ENCODE measurements at regions of chr15 and their contacts with region 1.

Region 1: DNA sequence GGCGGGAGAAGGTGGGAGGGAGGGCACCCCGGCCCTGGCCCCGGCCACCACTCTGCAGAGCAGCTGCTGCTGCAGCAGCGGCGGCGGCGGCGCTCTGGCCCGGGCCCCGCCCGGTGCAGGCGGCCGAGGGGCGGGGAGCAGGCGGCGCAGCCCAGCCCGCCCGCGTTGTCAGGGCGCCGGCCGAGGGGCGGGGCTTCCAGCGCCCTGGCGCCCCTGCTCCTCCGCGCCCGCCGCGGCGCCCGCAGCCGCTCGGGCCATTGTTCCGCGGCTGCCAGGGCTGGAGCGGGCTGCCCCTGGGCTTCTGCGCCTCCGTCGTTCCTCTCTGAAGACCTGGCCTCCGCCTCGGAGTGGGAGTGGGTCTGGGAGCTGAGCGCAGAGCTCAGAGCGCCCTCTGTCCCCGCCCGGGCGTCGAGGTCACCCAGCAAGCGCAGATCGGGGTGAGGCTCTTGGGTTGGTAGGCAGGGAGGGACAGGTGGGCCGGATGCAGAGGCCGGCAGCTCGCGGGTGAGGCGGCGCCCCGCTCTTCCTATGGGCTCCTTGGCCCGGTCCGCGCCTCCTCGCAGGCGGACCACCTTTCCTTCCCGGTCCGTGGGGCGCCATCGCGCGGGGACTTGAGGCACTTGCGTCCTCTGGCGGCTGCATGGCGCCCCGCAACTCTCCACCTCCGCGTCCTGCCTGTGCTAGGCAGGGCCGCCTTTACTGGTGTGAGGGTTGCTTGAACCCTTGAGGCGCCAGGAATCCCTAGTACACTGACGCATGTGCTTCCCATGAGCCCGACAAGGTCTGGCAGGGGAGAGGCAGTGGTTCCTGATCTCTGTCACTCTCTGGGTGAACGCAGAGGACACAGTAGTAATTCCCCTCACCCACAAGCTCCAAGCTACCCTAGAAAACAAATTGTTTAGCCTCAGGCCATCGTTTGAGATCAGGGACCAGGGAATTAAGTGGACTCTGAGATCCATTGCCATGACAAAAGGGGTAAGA is at the start of gene LPCAT4:
- DNase-seq: peak; percentile 76 to 82
- ATAC-seq: peak; percentile 91 to 92
- H3K4me3 ChIP-seq: peak within 1 kb of the TSS; percentile 88 to 98 (median 92)
- H3K27ac ChIP-seq: peak within 1 kb of the TSS; percentile 92 to 99 (median 96)
- H3K4me1 ChIP-seq: peaks cover 14 to 21% of the 10 kb centered on the region in 2 donors
- H3K27me3 ChIP-seq: no peaks in the 10 kb centered on the region
- CTCF ChIP-seq: peak; percentile 88 to 98 (median 97)
- POLR2A ChIP-seq: peak; percentile 56 to 59
- total RNA-seq, gene LPCAT4: 1.7 to 7.4 (median 4.0) TPM

Region 2: DNA sequence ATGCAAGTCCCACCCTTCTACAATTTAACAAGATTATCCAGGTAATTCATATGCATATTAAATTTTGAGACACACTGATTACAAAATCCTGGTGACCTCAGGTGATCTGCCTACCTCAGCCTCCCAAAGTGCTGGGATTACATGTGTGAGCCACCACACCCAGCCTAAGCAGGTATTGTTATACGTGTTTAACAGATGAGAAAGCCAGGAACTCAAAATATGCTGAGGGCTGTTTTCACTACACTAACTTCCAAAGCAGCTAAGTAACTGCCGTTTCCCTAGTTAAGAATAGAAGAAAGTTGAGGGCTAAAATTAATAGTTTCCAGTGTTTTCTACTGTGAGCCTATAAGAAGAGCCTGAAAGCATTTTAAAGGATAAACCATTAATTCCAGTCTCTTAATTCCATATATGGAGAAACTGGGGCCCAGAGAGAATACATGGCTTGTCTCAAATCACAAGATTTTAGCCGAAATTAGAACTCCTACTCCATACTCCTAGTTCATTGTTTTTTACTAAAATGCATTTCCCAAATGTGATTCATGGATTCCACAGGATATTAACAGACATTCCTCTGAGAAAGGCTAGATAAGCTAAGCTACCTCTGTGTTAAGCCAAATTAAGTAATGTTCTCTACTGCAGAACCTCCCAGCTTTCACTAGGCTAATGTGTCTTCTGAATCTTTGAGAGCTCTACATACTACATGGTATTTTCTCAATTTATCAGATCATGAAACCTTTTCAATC is 311.4 kb before region 1 on chr15:
- in situ Hi-C with region 1: loop called in 1 of 4 experiments (anchors 25 kb)
- intact Hi-C with region 1: no loop called
- DNase-seq: no peak
- ATAC-seq: no peak
- H3K4me3 ChIP-seq: no peak overlapping the region
- H3K27ac ChIP-seq: no peak overlapping the region
- H3K4me1 ChIP-seq: no peaks in the 10 kb centered on the region
- H3K27me3 ChIP-seq: no peaks in the 10 kb centered on the region
- CTCF ChIP-seq: no peak
- POLR2A ChIP-seq: no peak

Region 3: GRCh38 chr15:34084086-34084485 is 283.3 kb before region 1 on chr15:
- in situ Hi-C with region 1: no loop called
- intact Hi-C with region 1: no loop called
- DNase-seq: peak in 1 of 2 donors; percentile 57
- ATAC-seq: peak; percentile 75 to 96
- H3K4me3 ChIP-seq: no peak overlapping the region
- H3K27ac ChIP-seq: peak overlapping the region in 2 of 4 donors; percentile 23 to 41
- H3K4me1 ChIP-seq: no peaks in the 10 kb centered on the region
- H3K27me3 ChIP-seq: no peaks in the 10 kb centered on the region
- CTCF ChIP-seq: no peak
- POLR2A ChIP-seq: no peak

Region 4: DNA sequence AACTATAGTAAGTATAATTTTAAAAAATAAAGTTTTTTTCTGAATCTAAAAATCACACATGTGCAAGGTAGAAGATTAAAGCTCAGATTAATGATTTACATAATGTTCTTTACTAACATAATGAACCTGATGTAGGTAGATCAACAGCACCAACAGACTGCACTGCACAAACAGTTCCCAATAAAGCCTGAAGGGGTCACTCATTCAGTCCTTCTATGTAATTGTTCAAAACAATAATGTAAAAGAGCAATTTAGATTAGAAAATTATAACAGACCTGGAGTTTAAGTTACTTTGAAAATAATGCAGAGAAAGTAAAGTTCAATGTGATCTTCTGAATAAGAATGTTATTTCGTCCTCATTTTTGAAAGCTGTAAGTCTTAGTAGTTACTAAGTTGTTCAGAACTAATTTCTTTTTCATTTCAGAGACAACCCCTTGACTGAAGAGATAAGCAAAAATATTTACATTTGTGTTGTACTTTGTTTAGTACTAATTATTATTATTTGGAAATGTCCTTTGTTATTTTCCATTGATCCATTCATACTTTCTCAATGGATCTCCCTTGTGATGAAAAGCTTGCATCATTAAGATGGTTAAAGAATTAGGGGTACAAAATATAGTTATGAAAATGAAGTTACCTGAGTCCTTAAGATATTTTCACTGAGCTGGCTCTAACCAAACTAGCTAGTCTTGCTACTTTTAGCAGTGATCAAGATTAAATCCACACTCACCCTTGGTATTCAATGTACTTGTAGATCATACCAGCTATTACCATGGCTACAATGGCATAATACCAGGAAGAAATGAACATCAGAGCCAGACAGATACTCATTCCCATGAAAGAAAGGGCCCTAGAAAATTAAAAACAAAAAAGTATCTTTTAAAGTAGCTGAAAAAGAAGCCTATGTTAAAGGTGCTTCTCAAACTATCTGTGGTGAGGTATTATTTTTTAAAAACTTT is 125.7 kb before region 1 on chr15:
- in situ Hi-C with region 1: loop called in 2 of 4 experiments (anchors 10 to 25 kb)
- intact Hi-C with region 1: loop called (anchors 5 kb)
- DNase-seq: no peak
- ATAC-seq: peak in 1 of 2 donors; percentile 58
- H3K4me3 ChIP-seq: no peak overlapping the region
- H3K27ac ChIP-seq: no peak overlapping the region
- H3K4me1 ChIP-seq: no peaks in the 10 kb centered on the region
- H3K27me3 ChIP-seq: no peaks in the 10 kb centered on the region
- CTCF ChIP-seq: peak in 4 of 5 experiments; percentile 40 to 72 (median 55)
- POLR2A ChIP-seq: no peak

Region 5: GRCh38 chr15:34304613-34305012 is 62.8 kb before region 1 on chr15:
- in situ Hi-C with region 1: no loop called
- intact Hi-C with region 1: no loop called
- DNase-seq: no peak
- ATAC-seq: no peak
- H3K4me3 ChIP-seq: no peak overlapping the region
- H3K27ac ChIP-seq: no peak overlapping the region
- H3K4me1 ChIP-seq: peaks cover 0 to 7% of the 10 kb centered on the region in 2 donors
- H3K27me3 ChIP-seq: no peaks in the 10 kb centered on the region
- CTCF ChIP-seq: no peak
- POLR2A ChIP-seq: no peak

Region 6: DNA sequence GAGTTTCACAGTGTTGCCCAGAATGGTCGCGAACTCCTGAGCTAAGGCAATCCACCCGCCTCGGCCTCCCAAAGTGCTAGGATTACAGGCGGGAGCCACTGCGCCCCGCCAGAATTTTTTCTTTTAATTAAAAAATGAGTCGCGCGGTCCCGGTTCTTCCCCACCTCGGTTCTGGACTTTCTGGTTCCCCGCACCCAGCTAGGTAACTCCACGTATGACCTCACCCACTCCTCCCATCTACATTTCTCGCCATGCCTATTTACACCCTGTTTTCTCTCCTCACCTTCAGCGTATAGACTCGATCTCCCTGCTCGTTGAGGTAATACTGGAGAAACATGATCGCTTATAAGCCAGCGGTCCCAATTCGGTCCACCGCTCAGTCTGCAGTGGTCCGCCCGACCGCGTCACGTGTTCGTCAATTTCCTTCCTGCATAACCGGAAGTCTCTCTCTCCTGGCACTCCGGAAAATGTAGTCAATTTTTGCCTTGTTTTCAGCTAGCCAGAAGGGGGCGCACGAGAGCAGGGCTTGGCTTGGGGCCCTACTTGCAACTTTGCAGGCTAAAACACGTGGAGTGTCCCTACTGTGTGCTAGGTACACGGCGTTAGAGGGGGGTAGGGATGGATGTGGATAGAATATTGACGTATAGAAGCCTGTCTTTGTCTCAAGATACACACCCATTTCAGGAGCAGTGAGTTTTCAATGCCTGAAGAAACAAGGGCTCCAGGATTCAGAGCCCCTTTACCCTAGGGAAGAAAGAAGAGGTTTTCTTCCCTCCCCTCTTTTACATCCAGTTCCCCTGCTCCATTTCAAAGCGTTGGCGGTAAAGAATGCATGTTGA is 24.4 kb before region 1 on chr15 and contains the starts of genes NOP10 and NUTM1:
- in situ Hi-C with region 1: no loop called
- intact Hi-C with region 1: loop called (anchors 1 kb)
- DNase-seq: peak; percentile 83 to 89
- ATAC-seq: peak; percentile 98 to 99
- H3K4me3 ChIP-seq: peak within 1 kb of the TSS; percentile 80 to 99 (median 84)
- H3K27ac ChIP-seq: peak within 1 kb of the TSS; percentile 88 to 96 (median 90)
- H3K4me1 ChIP-seq: peaks cover 14 to 21% of the 10 kb centered on the region in 2 donors
- H3K27me3 ChIP-seq: no peaks in the 10 kb centered on the region
- CTCF ChIP-seq: peak; percentile 93 to 97 (median 94)
- POLR2A ChIP-seq: peak; percentile 67 to 72
- total RNA-seq, gene NOP10: 142 to 194 (median 170) TPM
- total RNA-seq, gene NUTM1: not detected

Region 7: GRCh38 chr15:34621675-34622074 is 254.3 kb after region 1 on chr15:
- in situ Hi-C with region 1: no loop called
- intact Hi-C with region 1: no loop called
- DNase-seq: no peak
- ATAC-seq: no peak
- H3K4me3 ChIP-seq: no peak overlapping the region
- H3K27ac ChIP-seq: no peak overlapping the region
- H3K4me1 ChIP-seq: peaks cover 0 to 16% of the 10 kb centered on the region in 2 donors
- H3K27me3 ChIP-seq: peaks cover 0 to 5% (median 0%) of the 10 kb centered on the region in 3 donors
- CTCF ChIP-seq: peak in 3 of 5 experiments; percentile 27 to 56 (median 34)
- POLR2A ChIP-seq: no peak

Measured in gastrocnemius medialis (tissue), 4 donors.